AG04450 (cell line): ENCODE measurements at regions of chr20 and their contacts with region 1.

Region 1: DNA sequence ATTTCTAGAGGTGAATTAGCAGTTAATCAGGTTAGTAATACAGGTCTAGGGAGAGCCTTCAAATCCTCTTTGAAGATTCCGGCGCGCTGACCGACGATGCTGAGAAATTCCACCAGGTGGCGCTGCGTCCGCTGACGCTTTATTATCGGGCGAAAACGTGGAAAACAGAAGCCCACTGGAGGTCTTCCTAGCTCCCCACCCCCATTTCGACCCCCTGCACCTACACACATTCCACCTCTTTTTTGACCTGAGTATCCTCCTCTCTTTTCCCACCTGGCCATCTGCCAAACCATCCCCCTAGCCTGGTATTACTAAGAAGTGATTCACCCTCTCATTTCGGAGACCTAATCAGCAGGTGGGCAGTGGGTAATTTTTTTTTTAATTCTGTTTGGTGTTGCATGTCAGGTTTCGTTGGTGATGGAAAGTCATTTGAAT is 65.4 kb upstream of the RIN2 start:
- DNase-seq: no peak
- H3K4me3 ChIP-seq: no peak overlapping the region
- H3K27ac ChIP-seq: no peak overlapping the region
- H3K27me3 ChIP-seq: no peaks in the 10 kb centered on the region
- CTCF ChIP-seq: peak; percentile 87

Region 2: GRCh38 chr20:19673575-19673974 is 19.1 kb before region 1 on chr20:
- CTCF ChIA-PET with region 1: no interaction called
- POLR2A ChIA-PET with region 1: no interaction called
- DNase-seq: no peak
- H3K4me3 ChIP-seq: no peak overlapping the region
- H3K27ac ChIP-seq: no peak overlapping the region
- H3K27me3 ChIP-seq: peaks cover 28% of the 10 kb centered on the region
- CTCF ChIP-seq: no peak

Region 3: DNA sequence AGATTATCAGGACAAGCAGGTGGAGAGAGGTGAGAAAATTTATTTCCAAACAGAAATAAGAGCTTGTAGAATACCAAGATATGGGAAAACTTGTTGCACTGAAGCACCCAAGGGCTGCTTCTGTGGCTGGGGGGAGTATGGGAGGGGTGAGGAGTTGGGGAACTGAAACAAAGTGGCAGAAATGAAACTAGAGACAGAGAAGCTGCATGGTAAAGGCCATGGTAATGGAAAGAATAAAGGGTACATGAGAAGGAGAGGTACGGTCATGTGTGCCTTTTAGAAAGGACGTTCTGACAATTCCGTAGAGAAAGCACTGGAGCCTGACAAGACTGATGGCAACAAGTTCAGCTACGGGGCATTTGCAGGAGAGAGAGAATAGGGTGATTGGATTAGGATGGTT is 13.8 kb after region 1 on chr20:
- CTCF ChIA-PET with region 1: interaction called, 11 read pairs
- POLR2A ChIA-PET with region 1: no interaction called
- DNase-seq: no peak
- H3K4me3 ChIP-seq: no peak overlapping the region
- H3K27ac ChIP-seq: no peak overlapping the region
- H3K27me3 ChIP-seq: peaks cover 31% of the 10 kb centered on the region
- CTCF ChIP-seq: no peak